A549 (cell line): ENCODE measurements at regions of chr12 and their contacts with region 1.

Region 1: GRCh38 chr12:5022465-5023061 is 21.1 kb upstream of the KCNA5 start:
- DNase-seq: peak; percentile 57 to 66
- ATAC-seq: peak; percentile 48 to 87; a peak in 3 of 6 replicates
- H3K4me3 ChIP-seq: no peak overlapping the region
- H3K27ac ChIP-seq: no peak overlapping the region
- H3K4me1 ChIP-seq: no peaks in the 10 kb centered on the region
- CTCF ChIP-seq: peak; percentile 68
- EP300 ChIP-seq: no peak
- POLR2A ChIP-seq: no peak
- RAD21 ChIP-seq: peak; percentile 72 to 82

Region 2: GRCh38 chr12:5034603-5035002 is 12.0 kb after region 1 on chr12:
- CTCF ChIA-PET with region 1: interaction called, 12 read pairs
- POLR2A ChIA-PET with region 1: no interaction called
- DNase-seq: no peak
- ATAC-seq: no peak
- H3K4me3 ChIP-seq: no peak overlapping the region
- H3K27ac ChIP-seq: no peak overlapping the region
- H3K4me1 ChIP-seq: no peaks in the 10 kb centered on the region
- CTCF ChIP-seq: no peak
- EP300 ChIP-seq: no peak
- POLR2A ChIP-seq: no peak
- RAD21 ChIP-seq: no peak

Region 3: GRCh38 chr12:5083955-5084849 is 61.6 kb after region 1 on chr12:
- CTCF ChIA-PET with region 1: interaction called, 72 read pairs
- POLR2A ChIA-PET with region 1: no interaction called
- DNase-seq: peak; percentile 53 to 63
- ATAC-seq: peak in 1 of 2 experiments; percentile 81; a peak in 3 of 6 replicates
- H3K4me3 ChIP-seq: no peak overlapping the region
- H3K27ac ChIP-seq: no peak overlapping the region
- H3K4me1 ChIP-seq: peaks cover 5% of the 10 kb centered on the region; the same call in 1 of the 3 replicates
- CTCF ChIP-seq: peak; percentile 68
- EP300 ChIP-seq: no peak
- POLR2A ChIP-seq: no peak
- RAD21 ChIP-seq: peak; percentile 69 to 80

Region 4: DNA sequence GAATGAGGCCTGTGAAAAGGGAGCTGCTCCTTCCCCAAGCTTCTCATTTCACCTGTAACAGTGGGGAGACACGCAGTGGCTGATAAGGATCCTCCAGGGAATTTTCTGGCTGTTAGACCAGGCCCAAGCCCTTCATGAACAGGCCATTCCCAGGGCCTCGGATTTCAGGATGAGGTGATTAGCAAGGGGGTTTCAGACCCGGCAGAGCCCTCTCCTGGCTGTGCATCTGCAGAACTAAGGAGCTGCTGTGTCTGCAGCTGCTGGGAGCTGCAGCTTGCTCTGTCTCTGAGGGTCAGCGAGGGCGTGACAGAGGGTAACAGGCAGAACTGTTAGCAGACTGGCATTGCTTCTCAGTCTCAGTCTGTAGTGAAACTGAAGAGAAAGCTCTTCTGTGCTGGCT is 131.5 kb after region 1 on chr12:
- CTCF ChIA-PET with region 1: no interaction called
- POLR2A ChIA-PET with region 1: no interaction called
- DNase-seq: no peak
- ATAC-seq: no peak
- H3K4me3 ChIP-seq: no peak overlapping the region
- H3K27ac ChIP-seq: no peak overlapping the region
- H3K4me1 ChIP-seq: no peaks in the 10 kb centered on the region
- CTCF ChIP-seq: no peak
- EP300 ChIP-seq: no peak
- POLR2A ChIP-seq: no peak
- RAD21 ChIP-seq: no peak

Region 5: GRCh38 chr12:5262450-5262849 is 239.9 kb after region 1 on chr12:
- CTCF ChIA-PET with region 1: no interaction called
- POLR2A ChIA-PET with region 1: no interaction called
- DNase-seq: no peak
- ATAC-seq: no peak
- H3K4me3 ChIP-seq: no peak overlapping the region
- H3K27ac ChIP-seq: no peak overlapping the region
- H3K4me1 ChIP-seq: no peaks in the 10 kb centered on the region
- CTCF ChIP-seq: no peak
- EP300 ChIP-seq: no peak
- POLR2A ChIP-seq: no peak
- RAD21 ChIP-seq: no peak